AG04449 (cell line): ENCODE measurements at regions of chr2 and their contacts with region 1.

Region 1: DNA sequence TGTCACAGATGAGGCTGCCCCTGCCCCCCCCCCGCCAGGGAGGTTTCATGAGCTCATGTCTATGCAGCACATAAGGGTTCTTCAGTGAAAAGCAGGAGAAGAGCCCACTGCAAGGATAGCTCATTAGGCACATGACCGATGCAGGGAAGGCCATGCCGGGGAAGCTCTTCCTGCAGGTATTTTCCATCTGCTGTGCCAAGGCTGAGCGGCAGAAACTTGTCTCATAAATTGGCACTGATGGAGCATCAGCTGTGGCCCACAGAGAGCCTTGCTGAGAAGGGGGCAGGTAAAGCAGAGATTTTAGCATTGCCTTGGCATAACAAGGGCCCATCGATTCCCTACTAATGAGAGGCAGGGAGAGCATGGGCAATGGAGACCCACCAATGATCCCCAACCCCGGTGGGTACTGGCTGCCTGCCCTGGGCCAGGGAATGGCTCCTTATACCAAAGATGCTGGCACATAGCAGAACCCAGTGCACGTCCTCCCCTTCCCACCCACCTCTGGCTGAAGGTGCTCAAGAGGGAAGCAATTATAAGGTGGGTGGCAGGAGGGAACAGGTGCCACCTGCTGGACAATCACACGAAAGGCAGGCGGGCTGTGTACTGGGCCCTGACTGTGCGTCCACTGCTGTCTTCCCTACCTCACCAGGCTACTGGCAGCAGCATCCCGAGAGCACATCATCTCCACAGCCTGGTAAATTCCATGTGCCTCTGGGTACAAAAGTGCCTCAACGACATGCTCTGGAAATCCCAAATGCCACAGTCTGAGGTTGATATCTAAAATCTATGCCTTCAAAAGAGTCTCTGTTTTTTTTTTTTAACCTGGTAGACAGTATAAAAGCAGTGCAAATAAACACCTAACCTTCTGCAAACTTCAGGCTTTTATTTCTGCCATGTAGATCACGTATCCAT is 41.4 kb downstream of the STEAP3 start:
- DNase-seq: no peak
- H3K4me3 ChIP-seq: no peak overlapping the region
- CTCF ChIP-seq: peak; percentile 90

Region 2: GRCh38 chr2:119028327-119029174 is 236.5 kb before region 1 on chr2:
- CTCF ChIA-PET with region 1: interaction called, 16 read pairs
- POLR2A ChIA-PET with region 1: no interaction called
- DNase-seq: no peak
- H3K4me3 ChIP-seq: no peak overlapping the region
- CTCF ChIP-seq: peak; percentile 61

Region 3: DNA sequence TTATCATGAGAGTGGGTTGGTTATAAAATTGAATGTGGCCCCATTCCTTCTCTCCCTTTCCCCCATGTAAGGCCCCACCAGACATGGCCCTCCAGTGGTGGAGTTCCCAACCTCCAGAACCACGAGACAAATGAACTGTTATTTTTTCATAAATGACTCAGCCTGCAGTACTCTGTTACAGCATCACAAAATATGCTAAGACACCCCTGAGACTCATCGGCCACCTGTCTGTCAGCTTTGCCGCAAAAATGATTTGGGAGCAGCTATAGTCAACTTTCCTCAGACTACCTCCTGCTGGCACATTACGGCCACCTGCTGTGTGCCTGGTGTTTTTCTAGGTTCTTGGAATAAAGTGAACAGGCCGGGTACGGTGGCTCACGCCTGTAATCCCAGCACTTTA is 85.0 kb before region 1 on chr2:
- CTCF ChIA-PET with region 1: no interaction called
- POLR2A ChIA-PET with region 1: no interaction called
- DNase-seq: no peak
- H3K4me3 ChIP-seq: no peak overlapping the region
- CTCF ChIP-seq: no peak

Region 4: DNA sequence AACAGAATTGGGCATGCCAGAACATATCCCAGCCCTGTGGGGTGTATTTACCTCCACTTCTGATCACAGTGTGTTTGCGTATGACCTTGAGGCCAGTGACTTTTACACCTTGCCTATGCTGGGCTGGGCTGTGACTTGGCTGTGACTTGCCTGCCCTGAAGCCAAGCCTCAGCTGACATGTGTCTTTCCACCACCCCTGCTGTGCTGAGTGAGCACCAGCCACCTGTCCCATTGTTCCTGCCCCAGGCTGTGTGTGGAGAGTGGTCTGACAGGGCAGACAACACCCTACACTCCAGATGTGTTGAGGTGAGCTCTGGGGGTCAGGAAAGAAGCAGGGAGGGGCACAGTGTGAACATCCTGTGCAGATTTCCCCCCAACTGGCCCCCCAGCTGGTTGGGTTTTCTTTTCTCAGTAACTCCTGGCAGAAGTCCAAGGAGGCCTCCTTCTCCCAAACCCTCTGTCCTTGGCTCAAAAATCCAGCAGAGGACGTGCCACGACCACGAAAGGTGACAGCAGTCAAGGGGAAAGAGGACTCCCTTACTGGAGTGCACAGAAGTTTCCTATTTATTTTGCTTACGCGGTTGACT is 46.5 kb before region 1 on chr2:
- CTCF ChIA-PET with region 1: interaction called, 60 read pairs
- POLR2A ChIA-PET with region 1: no interaction called
- DNase-seq: no peak
- H3K4me3 ChIP-seq: no peak overlapping the region
- CTCF ChIP-seq: peak; percentile 73

Region 5: GRCh38 chr2:119223521-119224390 is 41.3 kb before region 1 on chr2 and contains the start of gene STEAP3:
- CTCF ChIA-PET with region 1: interaction called, 60 read pairs
- POLR2A ChIA-PET with region 1: no interaction called
- DNase-seq: no peak
- H3K4me3 ChIP-seq: peak within 1 kb of the TSS; percentile 73
- CTCF ChIP-seq: no peak

Region 6: GRCh38 chr2:119234377-119235019 is 30.5 kb before region 1 on chr2:
- CTCF ChIA-PET with region 1: interaction called, 12 read pairs
- POLR2A ChIA-PET with region 1: interaction called, 3 read pairs
- DNase-seq: no peak
- H3K4me3 ChIP-seq: no peak overlapping the region
- CTCF ChIP-seq: peak; percentile 44

Region 7: DNA sequence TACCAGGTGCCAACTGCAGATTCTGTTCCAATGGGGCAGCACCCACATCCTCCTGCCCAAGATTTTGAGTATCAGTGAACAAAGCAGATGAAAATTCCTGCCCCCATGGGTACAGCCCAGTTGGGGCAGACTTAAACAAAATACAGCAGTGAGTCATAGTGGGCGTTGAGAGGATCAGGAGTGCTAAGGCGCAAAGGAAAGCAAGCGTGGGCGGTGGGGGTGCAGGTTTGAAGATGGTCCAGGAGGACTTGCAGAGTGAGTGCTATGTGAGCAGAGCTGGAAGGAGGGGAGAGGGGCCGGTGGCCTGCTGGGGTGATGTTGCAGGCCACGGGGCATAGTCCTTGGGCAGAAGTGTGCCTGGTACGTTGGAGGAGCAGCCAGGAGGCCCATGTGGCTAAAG is 16.7 kb before region 1 on chr2:
- CTCF ChIA-PET with region 1: interaction called, 21 read pairs
- POLR2A ChIA-PET with region 1: no interaction called
- DNase-seq: no peak
- H3K4me3 ChIP-seq: no peak overlapping the region
- CTCF ChIP-seq: no peak

Region 8: GRCh38 chr2:119282146-119282995 is 17.3 kb after region 1 on chr2:
- CTCF ChIA-PET with region 1: interaction called, 14 read pairs
- POLR2A ChIA-PET with region 1: no interaction called
- DNase-seq: no peak
- H3K4me3 ChIP-seq: no peak overlapping the region
- CTCF ChIP-seq: no peak